ENCODE measurements at regions of chr5 and their contacts with region 1.

Region 1: GRCh38 chr5:141960449-141961202 is 2.6 kb upstream of the PCDH12 start:
- DNase-seq: peak; percentile 64
- ATAC-seq: peak; percentile 99
- H3K4me3 ChIP-seq: no peak overlapping the region
- H3K27ac ChIP-seq: no peak overlapping the region
- H3K4me1 ChIP-seq: peaks cover 3% of the 10 kb centered on the region; the same call in 1 of the 2 replicates
- H3K27me3 ChIP-seq: no peaks in the 10 kb centered on the region
- CTCF ChIP-seq: peak; percentile 78 to 96 (median 92)
- EP300 ChIP-seq: 0 out of 4 replicates have a peak, but pooled peaks of 1 of the 2 experiments have one; percentile 26
- POLR2A ChIP-seq: no peak
- RAD21 ChIP-seq: peak; percentile 71

Region 2: GRCh38 chr5:141664732-141665461 is 295.7 kb before region 1 on chr5:
- CTCF ChIA-PET with region 1: interaction called, 27 read pairs
- POLR2A ChIA-PET with region 1: no interaction called
- RAD21 ChIA-PET with region 1: interaction called, 4 read pairs
- SMC1A ChIA-PET with region 1: interaction called, 4 read pairs
- in situ Hi-C with region 1: no loop called
- intact Hi-C with region 1: loop called (anchors 10 kb)
- DNase-seq: peak; percentile 31
- ATAC-seq: peak; percentile 100
- H3K4me3 ChIP-seq: no peak overlapping the region
- H3K27ac ChIP-seq: no peak overlapping the region
- H3K4me1 ChIP-seq: no peaks in the 10 kb centered on the region
- H3K27me3 ChIP-seq: no peaks in the 10 kb centered on the region
- CTCF ChIP-seq: peak; percentile 92 to 96 (median 94)
- EP300 ChIP-seq: no peak
- POLR2A ChIP-seq: no peak
- RAD21 ChIP-seq: peak; percentile 84

Region 3: DNA sequence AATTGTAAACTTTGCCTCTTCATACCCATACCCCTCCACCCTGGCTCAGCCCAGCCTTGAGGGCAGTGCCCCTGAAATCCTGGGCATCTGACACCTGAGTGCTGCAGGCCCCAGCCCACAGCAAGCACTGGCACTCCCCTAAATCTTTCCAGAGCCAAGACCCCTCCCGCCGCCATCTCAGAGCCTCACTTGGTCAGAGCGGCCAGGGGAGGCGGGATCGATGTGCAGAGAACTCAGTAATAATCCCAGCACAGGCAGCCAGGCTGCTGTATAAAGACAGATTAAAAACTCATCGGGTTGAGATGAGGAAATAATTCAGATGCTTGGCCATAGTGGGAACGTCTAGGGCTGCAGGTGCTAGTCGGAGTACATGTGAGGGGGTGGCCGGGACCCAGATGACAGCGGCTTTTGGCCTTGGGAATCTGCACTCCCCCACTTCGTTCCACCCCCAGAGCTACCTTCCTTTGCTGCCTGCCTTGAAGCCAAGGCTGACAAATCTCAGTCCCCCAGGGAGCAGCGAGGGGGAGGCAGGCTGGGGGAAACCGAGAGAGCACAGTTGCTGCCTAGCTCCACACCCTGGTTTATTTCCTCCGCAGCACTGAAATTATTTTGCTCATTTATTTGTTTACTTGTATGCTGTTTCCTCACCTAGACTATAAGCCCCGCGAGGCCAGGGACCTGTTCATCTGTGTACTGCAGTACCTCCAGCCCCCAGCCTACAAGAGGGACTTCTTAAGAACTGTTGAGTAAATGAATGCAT is 259.1 kb before region 1 on chr5:
- CTCF ChIA-PET with region 1: interaction called, 46 read pairs
- POLR2A ChIA-PET with region 1: no interaction called
- RAD21 ChIA-PET with region 1: interaction called, 16 read pairs
- SMC1A ChIA-PET with region 1: interaction called, 10 read pairs
- in situ Hi-C with region 1: no loop called
- intact Hi-C with region 1: no loop called
- DNase-seq: peak; percentile 17
- ATAC-seq: peak; percentile 81
- H3K4me3 ChIP-seq: peak overlapping the region; percentile 50; the same call in 1 of the 2 replicates
- H3K27ac ChIP-seq: no peak overlapping the region
- H3K4me1 ChIP-seq: peaks cover 12% of the 10 kb centered on the region
- H3K27me3 ChIP-seq: peaks cover 5 to 13% of the 10 kb centered on the region in 2 experiments; a peak in 3 of 4 replicates
- CTCF ChIP-seq: no peak
- EP300 ChIP-seq: no peak
- POLR2A ChIP-seq: no peak
- RAD21 ChIP-seq: no peak

Region 4: DNA sequence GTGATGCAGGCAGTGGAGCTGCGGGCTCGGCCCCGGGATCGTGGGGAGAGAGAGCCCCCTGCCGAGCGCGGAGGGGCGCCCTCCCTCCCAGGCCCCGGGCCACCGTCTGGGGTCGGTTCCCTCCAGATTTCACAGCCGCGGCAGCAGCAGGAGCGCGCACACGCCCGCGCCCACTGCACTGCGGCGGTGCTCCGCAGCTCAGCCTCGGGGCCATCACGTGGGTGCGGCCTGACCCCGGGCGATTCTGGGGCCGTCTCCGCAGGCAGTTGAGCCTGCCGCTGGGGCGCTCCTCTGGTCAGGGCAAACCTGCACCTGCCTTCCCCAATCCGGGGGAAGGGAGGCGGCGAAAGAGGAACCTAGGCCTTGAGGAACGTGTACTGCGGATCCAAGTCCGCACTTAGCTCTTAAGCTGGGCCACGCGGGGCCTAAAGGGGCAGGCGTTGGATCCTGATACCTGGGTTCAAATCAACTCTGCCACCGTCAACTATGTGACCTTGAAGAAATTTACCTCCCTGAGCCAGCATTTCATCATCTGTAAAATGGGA is 46.4 kb before region 1 on chr5:
- CTCF ChIA-PET with region 1: interaction called, 16 read pairs
- POLR2A ChIA-PET with region 1: no interaction called
- RAD21 ChIA-PET with region 1: interaction called, 5 read pairs
- SMC1A ChIA-PET with region 1: interaction called, 7 read pairs
- in situ Hi-C with region 1: no loop called
- intact Hi-C with region 1: no loop called
- DNase-seq: no peak
- ATAC-seq: peak; percentile 91
- H3K4me3 ChIP-seq: 0 out of 2 replicates have a peak overlapping the region, but pooled peaks have one; percentile 23
- H3K27ac ChIP-seq: no peak overlapping the region
- H3K4me1 ChIP-seq: peaks cover 23% of the 10 kb centered on the region
- H3K27me3 ChIP-seq: peaks cover 0 to 4% of the 10 kb centered on the region in 2 experiments; a peak in 1 of 4 replicates
- CTCF ChIP-seq: peak; percentile 26 to 40 (median 33); a peak in 4 of 6 replicates
- EP300 ChIP-seq: no peak
- POLR2A ChIP-seq: no peak
- RAD21 ChIP-seq: no peak

Region 5: DNA sequence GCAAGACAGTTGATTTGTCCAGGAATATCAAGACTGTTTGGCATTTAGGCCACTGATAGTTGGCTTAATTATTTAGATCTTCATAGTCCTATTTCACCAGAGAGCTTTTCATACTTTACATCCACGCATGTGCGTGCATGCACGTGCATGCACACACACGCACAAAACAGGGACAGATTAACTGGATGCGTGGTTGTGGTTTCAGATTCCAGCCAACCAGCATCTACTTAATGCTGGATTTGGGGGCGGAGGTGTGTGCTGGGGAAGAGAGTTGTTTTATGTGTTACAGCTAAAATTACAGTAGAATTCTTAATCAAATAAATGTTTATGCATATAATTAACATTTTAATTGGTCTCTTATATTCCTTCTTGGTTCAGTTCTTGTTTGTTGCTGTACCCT is 15.6 kb after region 1 on chr5:
- CTCF ChIA-PET with region 1: interaction called, 73 read pairs
- POLR2A ChIA-PET with region 1: interaction called, 21 read pairs
- RAD21 ChIA-PET with region 1: interaction called, 3 read pairs
- SMC1A ChIA-PET with region 1: interaction called, 42 read pairs
- in situ Hi-C with region 1: no loop called
- intact Hi-C with region 1: no loop called
- DNase-seq: no peak
- ATAC-seq: no peak
- H3K4me3 ChIP-seq: no peak overlapping the region
- H3K27ac ChIP-seq: no peak overlapping the region
- H3K4me1 ChIP-seq: no peaks in the 10 kb centered on the region
- H3K27me3 ChIP-seq: no peaks in the 10 kb centered on the region
- CTCF ChIP-seq: no peak
- EP300 ChIP-seq: no peak
- POLR2A ChIP-seq: no peak
- RAD21 ChIP-seq: no peak

Region 6: GRCh38 chr5:142036918-142037317 is 76.3 kb after region 1 on chr5:
- CTCF ChIA-PET with region 1: no interaction called
- POLR2A ChIA-PET with region 1: no interaction called
- RAD21 ChIA-PET with region 1: no interaction called
- SMC1A ChIA-PET with region 1: no interaction called
- in situ Hi-C with region 1: no loop called
- intact Hi-C with region 1: no loop called
- DNase-seq: no peak
- ATAC-seq: no peak
- H3K4me3 ChIP-seq: no peak overlapping the region
- H3K27ac ChIP-seq: no peak overlapping the region
- H3K4me1 ChIP-seq: no peaks in the 10 kb centered on the region
- H3K27me3 ChIP-seq: no peaks in the 10 kb centered on the region; a peak in 1 of 4 replicates
- CTCF ChIP-seq: no peak
- EP300 ChIP-seq: no peak
- POLR2A ChIP-seq: no peak
- RAD21 ChIP-seq: no peak

Region 7: DNA sequence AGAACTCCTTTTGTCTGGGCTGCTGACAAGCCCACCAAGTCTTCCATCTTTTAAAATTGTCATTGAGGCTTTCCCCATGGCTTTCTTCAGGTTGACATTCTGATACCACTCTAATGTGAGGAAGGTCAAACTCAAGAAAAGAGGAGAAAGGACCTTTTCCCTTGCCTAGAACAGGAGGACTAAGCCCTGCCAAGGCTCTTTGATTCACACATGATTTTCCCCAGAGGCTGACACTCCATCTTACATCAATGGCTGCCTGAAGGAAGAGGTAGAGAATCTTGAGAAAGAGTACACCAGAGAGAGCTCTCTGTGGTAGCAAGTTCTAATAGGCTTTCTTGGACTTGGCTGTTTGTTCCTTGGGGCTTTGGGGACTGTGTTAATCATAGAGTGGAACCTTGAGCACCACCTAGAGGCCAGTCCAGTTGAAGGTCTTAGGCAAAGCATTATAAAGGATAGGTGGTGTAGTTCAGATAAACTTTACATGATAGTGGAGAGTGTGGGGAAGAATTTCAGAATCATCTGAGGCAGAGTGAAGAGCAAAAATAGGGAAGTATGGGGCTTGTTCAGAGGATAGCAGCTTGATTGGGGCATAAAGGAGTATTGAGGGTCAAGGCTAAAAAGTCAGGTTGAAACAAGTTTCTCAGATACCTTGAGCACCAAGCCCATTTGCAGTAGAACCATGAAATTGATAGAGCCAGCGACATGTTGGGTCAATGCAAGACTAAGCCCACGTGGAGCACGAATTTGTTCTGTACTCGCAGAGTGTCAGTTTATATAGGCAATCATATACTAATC is 184.7 kb after region 1 on chr5:
- CTCF ChIA-PET with region 1: interaction called, 17 read pairs
- POLR2A ChIA-PET with region 1: no interaction called
- RAD21 ChIA-PET with region 1: interaction called, 9 read pairs
- SMC1A ChIA-PET with region 1: interaction called, 8 read pairs
- in situ Hi-C with region 1: no loop called
- intact Hi-C with region 1: no loop called
- DNase-seq: peak; percentile 11
- ATAC-seq: peak; percentile 96
- H3K4me3 ChIP-seq: no peak overlapping the region
- H3K27ac ChIP-seq: no peak overlapping the region
- H3K4me1 ChIP-seq: no peaks in the 10 kb centered on the region
- H3K27me3 ChIP-seq: no peaks in the 10 kb centered on the region
- CTCF ChIP-seq: peak; percentile 66 to 79 (median 70)
- EP300 ChIP-seq: no peak
- POLR2A ChIP-seq: no peak
- RAD21 ChIP-seq: peak; percentile 54